Right cardiac atrium (tissue), 5 donors: ENCODE measurements at regions of chr10 and their contacts with region 1.

Region 1: GRCh38 chr10:91251430-91252056 is 31.1 kb downstream of the PCGF5 start:
- DNase-seq: peak in 2 of 3 donors; percentile 28 to 40
- ATAC-seq: peak; percentile 64 to 65
- H3K4me3 ChIP-seq: no peak overlapping the region
- H3K27ac ChIP-seq: no peak overlapping the region
- H3K4me1 ChIP-seq: peaks cover 4% of the 10 kb centered on the region
- H3K27me3 ChIP-seq: no peaks in the 10 kb centered on the region

Region 2: GRCh38 chr10:90885176-90885575 is 366.4 kb before region 1 on chr10:
- intact Hi-C with region 1: loop called in 1 of 4 experiments (anchors 10 kb)
- DNase-seq: no peak
- ATAC-seq: no peak
- H3K4me3 ChIP-seq: no peak overlapping the region
- H3K27ac ChIP-seq: no peak overlapping the region
- H3K4me1 ChIP-seq: peaks cover 3% of the 10 kb centered on the region
- H3K27me3 ChIP-seq: no peaks in the 10 kb centered on the region

Region 3: DNA sequence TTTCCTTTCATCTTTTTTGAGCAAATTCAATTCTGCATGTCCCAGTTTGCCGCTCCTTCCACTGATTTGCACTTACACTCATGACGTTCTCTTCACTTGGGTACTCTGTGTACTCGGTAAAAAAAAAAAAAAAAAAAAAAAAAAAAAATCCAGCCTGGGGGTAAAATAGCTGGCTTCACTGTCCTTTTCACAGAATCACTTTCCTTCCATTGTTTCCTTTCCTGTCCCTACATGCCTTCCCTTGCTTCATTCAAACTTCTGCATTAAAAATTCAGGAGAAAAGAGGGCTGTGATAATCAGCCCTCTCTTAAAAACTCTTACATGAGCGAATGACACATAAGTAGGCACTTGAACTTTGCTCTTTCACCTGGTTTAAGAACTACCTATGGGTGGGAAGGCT is 339.4 kb before region 1 on chr10:
- intact Hi-C with region 1: loop called in 2 of 4 experiments (anchors 5 to 10 kb)
- DNase-seq: no peak
- ATAC-seq: peak; percentile 3 to 9
- H3K4me3 ChIP-seq: no peak overlapping the region
- H3K27ac ChIP-seq: no peak overlapping the region
- H3K4me1 ChIP-seq: no peaks in the 10 kb centered on the region
- H3K27me3 ChIP-seq: no peaks in the 10 kb centered on the region

Region 4: GRCh38 chr10:91006001-91006751 is 245.4 kb before region 1 on chr10:
- intact Hi-C with region 1: loop called (anchors 5 to 10 kb)
- DNase-seq: peak in 2 of 3 donors; percentile 37 to 55
- ATAC-seq: peak; percentile 66 to 76
- H3K4me3 ChIP-seq: no peak overlapping the region
- H3K27ac ChIP-seq: no peak overlapping the region
- H3K4me1 ChIP-seq: peaks cover 2% of the 10 kb centered on the region
- H3K27me3 ChIP-seq: no peaks in the 10 kb centered on the region

Region 5: DNA sequence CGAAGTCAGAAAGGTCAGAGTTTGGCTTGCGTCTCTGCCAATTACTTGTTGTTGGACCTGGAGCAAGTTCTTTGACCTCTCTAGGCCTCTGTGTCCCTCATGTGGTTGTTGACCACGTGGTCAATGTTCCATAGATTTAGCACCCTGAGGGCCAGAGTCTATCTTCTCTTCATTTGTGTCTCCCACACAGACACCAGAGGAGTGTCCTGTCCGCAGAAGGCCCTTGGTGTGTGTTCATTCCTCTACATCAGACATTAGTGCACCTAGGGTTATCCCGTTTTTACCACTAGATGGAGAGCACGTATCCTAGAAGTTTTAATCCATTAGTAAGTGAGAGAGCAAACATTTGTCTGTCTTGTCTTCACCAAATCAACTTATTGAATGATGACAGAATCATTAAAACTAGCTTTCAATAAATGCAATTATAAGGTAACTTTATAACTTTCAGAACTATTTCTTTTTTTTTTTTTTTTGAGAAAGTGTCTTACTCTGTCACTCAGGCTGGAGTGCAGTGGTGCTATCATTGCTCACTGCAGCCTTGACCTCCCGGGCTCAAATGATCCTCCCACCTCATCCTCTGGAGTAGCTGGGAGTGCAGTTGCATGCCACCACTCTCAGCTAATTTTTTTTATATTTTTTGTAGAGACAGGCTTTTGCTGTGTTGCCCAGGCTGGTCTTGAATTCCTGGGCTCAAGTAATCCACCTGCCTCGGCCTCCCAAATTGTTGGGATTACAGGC is 208.2 kb before region 1 on chr10:
- intact Hi-C with region 1: loop called in 1 of 4 experiments (anchors 5 kb)
- DNase-seq: no peak
- ATAC-seq: peak; percentile 81 to 83
- H3K4me3 ChIP-seq: no peak overlapping the region
- H3K27ac ChIP-seq: no peak overlapping the region
- H3K4me1 ChIP-seq: peaks cover 2% of the 10 kb centered on the region
- H3K27me3 ChIP-seq: no peaks in the 10 kb centered on the region

Region 6: GRCh38 chr10:91210435-91210834 is 41.1 kb before region 1 on chr10:
- intact Hi-C with region 1: no loop called
- DNase-seq: no peak
- ATAC-seq: no peak
- H3K4me3 ChIP-seq: no peak overlapping the region
- H3K27ac ChIP-seq: no peak overlapping the region
- H3K4me1 ChIP-seq: no peaks in the 10 kb centered on the region
- H3K27me3 ChIP-seq: no peaks in the 10 kb centered on the region

Region 7: DNA sequence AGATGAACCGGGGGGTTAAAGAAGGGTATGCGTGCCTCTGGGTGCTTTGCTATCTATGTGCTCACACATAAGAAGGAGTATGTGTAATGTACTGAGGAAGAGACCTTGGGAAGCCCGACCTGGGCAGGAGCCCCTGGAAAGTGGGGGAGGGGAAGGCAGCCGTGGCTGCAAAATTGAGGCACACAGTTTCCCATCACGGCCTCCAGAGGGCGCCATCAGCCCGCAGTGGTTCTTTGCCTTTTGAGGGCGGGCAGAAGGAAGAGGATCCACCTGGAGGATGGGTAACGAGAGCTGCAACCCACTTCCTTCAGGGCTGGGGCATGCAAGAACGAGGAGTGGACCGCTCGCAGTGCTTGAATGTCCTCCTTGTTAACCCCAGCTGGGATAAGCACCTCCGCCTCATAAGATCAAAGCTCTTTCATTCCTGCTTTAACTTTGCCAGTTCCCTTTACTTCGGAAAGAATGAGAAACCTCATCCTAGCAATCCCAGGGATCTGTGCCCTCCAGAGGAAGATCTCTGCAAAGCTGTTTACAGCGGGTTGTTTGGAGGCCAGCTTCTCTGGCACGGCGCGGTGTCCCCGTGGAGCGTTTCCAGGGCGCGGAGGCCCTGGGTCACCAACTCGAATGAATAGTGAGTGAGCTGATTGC is 46.8 kb after region 1 on chr10:
- intact Hi-C with region 1: no loop called
- DNase-seq: peak; percentile 71 to 88 (median 86)
- ATAC-seq: peak; percentile 90 to 93
- H3K4me3 ChIP-seq: peak overlapping the region; percentile 36
- H3K27ac ChIP-seq: peak overlapping the region; percentile 1
- H3K4me1 ChIP-seq: no peaks in the 10 kb centered on the region
- H3K27me3 ChIP-seq: no peaks in the 10 kb centered on the region